WTC11 (cell line): ENCODE measurements at regions of chr1 and their contacts with region 1.

Region 1: DNA sequence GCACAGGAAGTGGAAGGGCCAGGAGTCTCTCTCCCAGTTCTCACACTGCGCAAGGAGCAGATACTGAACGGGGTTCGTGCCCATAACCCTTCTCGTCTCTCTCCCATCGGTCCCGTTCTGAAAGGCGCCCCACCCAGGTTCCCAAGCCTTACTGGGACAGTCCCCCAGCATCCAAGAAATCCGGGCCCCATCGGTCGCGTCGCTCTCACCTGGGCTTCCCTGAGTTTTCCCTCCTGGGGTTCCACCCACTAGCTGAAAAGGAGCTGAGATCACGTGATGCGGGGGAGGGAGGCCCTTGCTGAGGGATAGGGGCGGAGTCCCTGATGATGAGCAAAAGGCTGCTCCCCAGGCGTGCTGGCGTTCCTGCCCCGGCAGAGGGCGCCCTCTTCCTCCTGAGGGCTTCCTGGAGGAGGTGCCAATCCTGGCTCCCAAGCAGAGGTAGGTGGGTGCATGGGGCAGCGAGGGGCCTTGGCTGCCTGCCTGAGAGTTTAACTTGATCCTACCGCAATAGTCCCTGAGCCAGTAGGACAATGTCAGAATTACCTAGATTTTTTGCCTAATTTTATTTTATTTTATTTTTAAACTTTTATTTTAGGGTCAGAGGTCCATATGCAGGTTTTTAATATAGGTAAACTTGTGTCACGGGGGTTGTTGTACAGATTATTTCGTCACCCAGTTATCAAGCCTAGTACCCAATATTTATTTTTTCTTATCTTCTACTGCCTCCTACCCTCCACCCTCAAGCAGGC is at the start of gene SPOCD1:
- DNase-seq: peak; percentile 99
- ATAC-seq: peak; percentile 95
- H3K4me3 Mint-ChIP-seq: peak within 1 kb of the TSS; percentile 86
- H3K27ac Mint-ChIP-seq: 0 out of 2 replicates have a peak within 1 kb of the TSS, but pooled peaks have one; percentile 64
- H3K4me1 Mint-ChIP-seq: peaks cover 4% of the 10 kb centered on the region; the same call in 1 of the 2 replicates
- H3K27me3 Mint-ChIP-seq: peaks cover 5% of the 10 kb centered on the region
- CTCF ChIP-seq: peak; percentile 94
- total RNA-seq, gene SPOCD1: 3.0 to 4.9 TPM (median 3.7 TPM) in 3 replicates

Region 2: GRCh38 chr1:31798433-31799195 is 17.3 kb before region 1 on chr1:
- CTCF ChIA-PET with region 1: interaction called, 16 read pairs
- POLR2A ChIA-PET with region 1: no interaction called
- DNase-seq: no peak
- ATAC-seq: no peak; the same call in 1 of the 2 replicates
- H3K4me3 Mint-ChIP-seq: no peak overlapping the region
- H3K27ac Mint-ChIP-seq: no peak overlapping the region
- H3K4me1 Mint-ChIP-seq: peaks cover 32% of the 10 kb centered on the region
- H3K27me3 Mint-ChIP-seq: no peaks in the 10 kb centered on the region
- CTCF ChIP-seq: no peak

Region 3: GRCh38 chr1:31944205-31945089 is 128.5 kb after region 1 on chr1:
- CTCF ChIA-PET with region 1: interaction called, 10 read pairs
- POLR2A ChIA-PET with region 1: no interaction called
- DNase-seq: peak; percentile 96
- ATAC-seq: peak; percentile 95
- H3K4me3 Mint-ChIP-seq: peak overlapping the region; percentile 76
- H3K27ac Mint-ChIP-seq: peak overlapping the region; percentile 97
- H3K4me1 Mint-ChIP-seq: peaks cover 27% of the 10 kb centered on the region
- H3K27me3 Mint-ChIP-seq: peaks cover 5% of the 10 kb centered on the region
- CTCF ChIP-seq: no peak

Region 4: GRCh38 chr1:31955917-31956736 is 140.2 kb after region 1 on chr1:
- CTCF ChIA-PET with region 1: interaction called, 153 read pairs
- POLR2A ChIA-PET with region 1: no interaction called
- DNase-seq: peak; percentile 40
- ATAC-seq: peak; percentile 19
- H3K4me3 Mint-ChIP-seq: no peak overlapping the region
- H3K27ac Mint-ChIP-seq: peak overlapping the region; percentile 92
- H3K4me1 Mint-ChIP-seq: peaks cover 40% of the 10 kb centered on the region
- H3K27me3 Mint-ChIP-seq: peaks cover 2% of the 10 kb centered on the region; the same call in 1 of the 2 replicates
- CTCF ChIP-seq: no peak

Region 5: GRCh38 chr1:31961536-31961935 is 145.6 kb after region 1 on chr1:
- CTCF ChIA-PET with region 1: interaction called, 153 read pairs
- POLR2A ChIA-PET with region 1: interaction called, 6 read pairs
- DNase-seq: no peak
- ATAC-seq: no peak
- H3K4me3 Mint-ChIP-seq: no peak overlapping the region
- H3K27ac Mint-ChIP-seq: no peak overlapping the region
- H3K4me1 Mint-ChIP-seq: peaks cover 5% of the 10 kb centered on the region
- H3K27me3 Mint-ChIP-seq: peaks cover under 1% of the 10 kb centered on the region; the same call in 1 of the 2 replicates
- CTCF ChIP-seq: no peak